ENCODE measurements at regions of chr22 and their contacts with region 1.

Region 1: DNA sequence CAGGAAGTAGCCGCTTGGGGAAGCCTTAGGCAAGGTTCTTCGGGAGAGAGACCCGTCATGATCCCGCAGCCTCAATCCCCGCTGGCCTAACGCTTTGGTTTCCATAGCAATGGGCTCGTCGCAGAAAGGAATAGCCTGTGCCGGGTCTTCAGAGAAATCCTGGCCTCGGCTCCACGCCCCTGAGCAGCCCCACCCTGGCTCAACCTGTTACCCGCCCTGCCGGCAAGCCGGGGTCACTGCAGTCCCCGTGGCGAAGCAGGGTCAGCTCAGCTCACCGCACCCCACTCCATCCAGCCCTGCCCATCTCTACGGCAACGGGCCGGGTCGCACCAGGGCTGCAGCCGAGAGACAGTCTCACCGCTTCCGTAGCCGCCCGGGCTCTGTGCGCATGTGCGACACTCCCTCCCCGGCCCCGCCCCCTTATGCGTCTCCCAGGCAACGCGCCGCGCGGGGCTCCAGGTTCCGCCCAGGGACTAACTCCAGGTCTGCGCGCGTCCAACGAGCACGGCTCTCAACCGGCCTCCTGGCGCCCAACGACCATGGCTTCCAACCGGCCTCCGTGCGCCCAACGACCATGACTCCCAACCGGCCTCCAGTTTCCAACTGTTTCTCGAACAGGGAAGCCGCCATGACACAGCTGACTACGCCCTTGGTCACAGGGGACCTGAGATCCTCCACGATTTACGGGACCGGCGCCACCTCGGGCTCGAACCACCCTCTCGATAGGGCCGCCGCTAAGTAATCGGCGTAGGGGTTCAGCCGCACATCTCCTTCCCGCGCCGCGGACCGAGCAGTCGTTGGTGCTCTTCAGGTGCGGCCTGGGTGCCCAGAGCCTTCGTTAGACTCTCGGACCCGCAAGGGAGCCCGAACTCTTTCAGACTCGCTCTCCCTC is at the start of gene DUSP18:
- H3K4me3 Mint-ChIP-seq: peak within 1 kb of the TSS; percentile 91
- H3K27ac Mint-ChIP-seq: peak within 1 kb of the TSS; percentile 84
- H3K4me1 Mint-ChIP-seq: peaks cover 47% of the 10 kb centered on the region
- H3K27me3 Mint-ChIP-seq: peaks cover 18% of the 10 kb centered on the region

Region 2: DNA sequence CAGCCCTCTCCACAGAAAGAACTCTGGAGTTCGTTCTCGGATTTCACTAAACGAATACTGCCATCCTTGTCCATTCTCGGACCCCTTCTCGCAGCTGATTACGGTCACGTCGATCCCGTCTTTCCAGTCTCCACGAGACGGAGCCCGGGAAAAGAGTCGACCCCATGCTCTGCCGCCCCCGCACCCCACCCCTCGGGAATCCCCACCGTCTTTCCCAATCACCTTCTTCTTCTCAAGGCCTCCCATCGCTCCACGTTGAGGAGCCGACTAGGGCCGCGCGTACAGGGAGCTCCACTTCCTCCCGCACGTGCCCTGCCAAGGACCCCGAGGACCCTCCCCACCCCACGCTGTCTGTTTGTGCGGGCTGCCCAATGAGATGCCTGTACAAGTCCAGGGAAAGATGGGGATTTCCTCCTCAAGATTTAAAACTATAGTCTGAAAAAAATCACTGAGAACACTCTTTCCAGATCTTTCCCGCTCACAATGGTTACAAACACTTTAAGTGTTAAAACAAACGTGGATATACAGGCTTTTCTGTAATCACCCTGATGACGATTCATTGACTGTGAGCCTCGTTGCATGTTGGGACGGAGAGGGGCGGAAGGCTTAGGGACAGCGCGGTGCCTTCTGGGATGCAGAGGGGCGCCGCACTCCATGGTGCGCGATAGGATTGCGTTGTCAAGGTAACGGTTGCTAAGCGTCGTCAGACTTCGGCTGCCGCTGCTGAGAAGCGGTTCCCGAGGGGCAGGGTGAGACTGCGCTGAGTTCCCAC is 76.0 kb before region 1 on chr22 and contains the start of gene PES1:
- intact Hi-C with region 1: loop called (anchors 1 kb)
- H3K4me3 Mint-ChIP-seq: no peak within 1 kb of the TSS
- H3K27ac Mint-ChIP-seq: no peak within 1 kb of the TSS
- H3K4me1 Mint-ChIP-seq: no peaks in the 10 kb centered on the region
- H3K27me3 Mint-ChIP-seq: peaks cover 6% of the 10 kb centered on the region